ENCODE measurements at regions of chr13 and their contacts with region 1.

Region 1: DNA sequence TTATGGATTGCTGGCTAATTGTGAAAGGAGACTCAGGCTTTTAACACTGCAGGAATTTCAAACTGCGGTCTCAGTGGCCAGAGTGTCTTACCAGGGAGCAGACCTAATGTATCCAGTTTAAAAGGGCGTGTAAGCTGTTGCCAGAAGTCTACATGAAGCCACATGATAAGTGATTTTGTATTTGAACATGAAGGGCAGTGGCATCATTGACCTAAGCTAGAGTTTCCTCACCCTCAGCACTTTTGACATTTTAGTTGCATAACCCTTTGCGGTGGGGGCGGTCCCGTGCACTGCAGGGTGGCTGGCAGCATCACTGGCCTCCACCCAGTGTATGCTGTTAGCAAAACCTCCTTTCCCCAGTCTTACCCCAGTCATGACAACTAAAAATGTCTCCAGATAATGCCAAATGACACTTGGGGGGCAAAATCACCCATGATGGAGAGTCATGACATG is 23.7 kb upstream of the GPR18 start:
- DNase-seq: peak; percentile 46
- ATAC-seq: peak; percentile 81
- H3K4me3 Mint-ChIP-seq: peak overlapping the region; percentile 75
- H3K27ac Mint-ChIP-seq: peak overlapping the region; percentile 95
- H3K4me1 Mint-ChIP-seq: peaks cover 95% of the 10 kb centered on the region
- H3K27me3 Mint-ChIP-seq: no peaks in the 10 kb centered on the region
- CTCF ChIP-seq: no peak

Region 2: GRCh38 chr13:98509271-98510155 is 772.3 kb before region 1 on chr13:
- CTCF ChIA-PET with region 1: no interaction called
- POLR2A ChIA-PET with region 1: interaction called, 11 read pairs
- intact Hi-C with region 1: no loop called
- DNase-seq: no peak
- ATAC-seq: peak; percentile 84
- H3K4me3 Mint-ChIP-seq: peak overlapping the region; percentile 71
- H3K27ac Mint-ChIP-seq: peak overlapping the region; percentile 96
- H3K4me1 Mint-ChIP-seq: peaks cover 100% of the 10 kb centered on the region
- H3K27me3 Mint-ChIP-seq: no peaks in the 10 kb centered on the region
- CTCF ChIP-seq: no peak

Region 3: GRCh38 chr13:99214232-99214631 is 67.6 kb before region 1 on chr13:
- CTCF ChIA-PET with region 1: no interaction called
- POLR2A ChIA-PET with region 1: no interaction called
- intact Hi-C with region 1: no loop called
- DNase-seq: no peak
- ATAC-seq: peak; percentile 83
- H3K4me3 Mint-ChIP-seq: peak overlapping the region; percentile 49
- H3K27ac Mint-ChIP-seq: peak overlapping the region; percentile 81
- H3K4me1 Mint-ChIP-seq: peaks cover 57% of the 10 kb centered on the region
- H3K27me3 Mint-ChIP-seq: no peaks in the 10 kb centered on the region
- CTCF ChIP-seq: no peak

Region 4: DNA sequence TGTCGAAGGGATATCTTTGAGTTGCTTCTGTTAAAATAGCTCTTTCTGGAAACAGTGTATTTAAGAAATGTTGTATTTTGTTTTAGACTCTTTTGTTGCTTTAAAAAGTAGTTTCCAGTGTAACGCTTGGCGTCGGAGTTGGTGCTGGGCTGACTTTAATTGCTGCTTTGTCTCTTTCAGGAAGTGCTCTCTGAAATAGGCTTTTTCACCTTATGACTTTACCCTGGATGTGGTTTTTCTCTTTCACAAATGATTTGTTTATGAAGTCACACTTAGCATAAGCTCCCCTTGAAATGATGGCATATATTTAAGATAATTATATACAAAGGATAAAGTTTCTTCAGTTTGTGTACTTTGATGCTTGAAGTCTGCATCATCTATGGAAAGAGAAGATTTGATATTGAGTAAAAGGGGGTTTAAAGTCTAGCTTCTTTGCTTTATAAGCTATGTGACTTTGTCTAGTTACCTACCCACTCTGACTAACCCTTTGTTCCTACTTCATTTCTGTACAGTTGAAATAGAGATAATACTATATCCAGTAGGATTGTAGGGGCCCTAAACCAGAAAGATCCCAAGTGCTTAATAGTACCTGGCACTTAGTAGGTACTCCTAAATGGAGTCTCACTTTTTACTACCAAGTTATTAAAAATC is 23.5 kb before region 1 on chr13 and contains the start of gene GPR18:
- CTCF ChIA-PET with region 1: no interaction called
- POLR2A ChIA-PET with region 1: interaction called, 4 read pairs
- intact Hi-C with region 1: loop called (anchors 1 kb)
- DNase-seq: no peak
- ATAC-seq: peak; percentile 65
- H3K4me3 Mint-ChIP-seq: peak within 1 kb of the TSS; percentile 94
- H3K27ac Mint-ChIP-seq: peak within 1 kb of the TSS; percentile 96
- H3K4me1 Mint-ChIP-seq: peaks cover 86% of the 10 kb centered on the region
- H3K27me3 Mint-ChIP-seq: no peaks in the 10 kb centered on the region
- CTCF ChIP-seq: no peak
- total RNA-seq, gene GPR18: 29.0 and 32.4 TPM in 2 replicates

Region 5: DNA sequence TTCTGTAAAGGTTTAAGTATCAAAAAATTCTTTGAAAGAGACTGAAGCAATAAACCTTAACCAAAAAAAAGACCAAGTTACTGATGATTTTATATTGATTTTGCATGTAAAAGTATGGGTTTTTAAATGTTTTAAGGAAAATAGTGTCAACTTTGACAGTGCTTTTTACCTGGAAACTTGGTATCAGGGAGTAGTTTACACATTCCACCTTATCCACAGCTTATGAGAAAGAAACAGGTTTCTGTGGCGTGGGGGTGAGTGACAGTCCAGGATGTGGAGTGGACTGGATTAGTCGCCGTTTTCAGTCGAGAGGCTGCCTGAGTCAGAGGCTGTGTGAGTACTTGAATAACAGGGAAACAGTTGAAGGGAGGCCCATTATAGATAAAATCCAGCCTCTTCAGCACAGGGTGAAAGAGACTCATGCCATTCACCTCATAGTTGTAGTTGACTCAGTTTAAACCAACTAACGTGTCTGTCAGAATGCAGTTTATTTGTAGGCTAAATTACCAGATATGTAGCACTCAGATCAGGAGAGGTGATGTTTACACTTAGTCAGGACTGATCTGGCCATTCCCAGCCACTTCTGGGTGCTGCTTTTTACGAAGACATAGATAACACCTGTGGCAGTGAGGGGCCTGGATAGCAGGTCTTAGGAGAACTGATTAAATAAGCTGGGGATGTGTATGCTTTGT is 26.0 kb after region 1 on chr13:
- CTCF ChIA-PET with region 1: interaction called, 9 read pairs
- POLR2A ChIA-PET with region 1: interaction called, 26 read pairs
- intact Hi-C with region 1: loop called (anchors 1 kb)
- DNase-seq: no peak
- ATAC-seq: peak; percentile 57
- H3K4me3 Mint-ChIP-seq: peak overlapping the region; percentile 95
- H3K27ac Mint-ChIP-seq: peak overlapping the region; percentile 92
- H3K4me1 Mint-ChIP-seq: peaks cover 82% of the 10 kb centered on the region
- H3K27me3 Mint-ChIP-seq: no peaks in the 10 kb centered on the region
- CTCF ChIP-seq: no peak

Region 6: DNA sequence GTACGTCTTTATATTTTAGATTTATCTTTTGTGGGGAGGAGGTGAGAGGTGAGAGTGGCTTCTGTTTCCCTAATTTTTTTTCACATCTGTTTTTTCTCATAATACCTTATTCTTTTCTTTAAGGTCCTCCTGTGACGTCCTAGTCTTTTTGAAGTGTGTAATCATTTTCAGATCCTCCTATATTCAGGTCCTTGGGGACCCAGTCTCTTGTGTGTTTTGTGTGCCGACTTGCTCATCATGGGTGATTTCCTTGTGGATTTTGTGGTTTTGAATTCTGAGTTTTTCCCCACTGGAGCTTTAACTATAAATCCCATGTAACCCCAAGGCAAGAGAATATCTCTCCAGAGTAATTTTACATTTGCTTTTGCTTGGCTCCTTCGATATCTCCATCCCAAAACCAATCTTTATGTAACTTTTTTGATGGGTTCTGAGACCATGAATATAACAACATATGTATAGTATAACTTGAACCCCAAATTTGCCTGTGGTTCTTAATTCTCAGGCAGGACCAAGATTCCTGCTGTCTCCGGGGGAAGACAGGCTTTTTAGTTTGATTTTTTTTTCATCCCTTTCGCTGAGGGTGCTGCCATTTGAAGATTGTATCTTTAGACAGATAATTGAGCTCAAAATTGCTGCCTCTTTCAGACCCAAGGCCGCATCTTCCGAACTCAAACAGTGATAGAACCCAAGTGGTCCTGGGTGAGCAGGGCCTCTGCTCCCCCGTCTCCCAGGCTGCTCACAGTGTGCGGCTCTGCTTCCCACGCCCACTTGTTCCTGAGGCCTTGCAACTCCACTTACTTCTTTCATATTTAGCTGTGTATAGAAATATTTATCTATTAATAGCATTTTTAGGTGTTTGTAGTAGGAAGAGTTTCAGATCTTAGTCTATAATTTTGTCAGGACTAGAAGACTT is 84.5 kb after region 1 on chr13:
- CTCF ChIA-PET with region 1: interaction called, 3 read pairs
- POLR2A ChIA-PET with region 1: no interaction called
- intact Hi-C with region 1: loop called (anchors 2 kb)
- DNase-seq: no peak
- ATAC-seq: peak; percentile 90
- H3K4me3 Mint-ChIP-seq: peak overlapping the region; percentile 71
- H3K27ac Mint-ChIP-seq: peak overlapping the region; percentile 89
- H3K4me1 Mint-ChIP-seq: peaks cover 85% of the 10 kb centered on the region
- H3K27me3 Mint-ChIP-seq: no peaks in the 10 kb centered on the region
- CTCF ChIP-seq: no peak

Region 7: DNA sequence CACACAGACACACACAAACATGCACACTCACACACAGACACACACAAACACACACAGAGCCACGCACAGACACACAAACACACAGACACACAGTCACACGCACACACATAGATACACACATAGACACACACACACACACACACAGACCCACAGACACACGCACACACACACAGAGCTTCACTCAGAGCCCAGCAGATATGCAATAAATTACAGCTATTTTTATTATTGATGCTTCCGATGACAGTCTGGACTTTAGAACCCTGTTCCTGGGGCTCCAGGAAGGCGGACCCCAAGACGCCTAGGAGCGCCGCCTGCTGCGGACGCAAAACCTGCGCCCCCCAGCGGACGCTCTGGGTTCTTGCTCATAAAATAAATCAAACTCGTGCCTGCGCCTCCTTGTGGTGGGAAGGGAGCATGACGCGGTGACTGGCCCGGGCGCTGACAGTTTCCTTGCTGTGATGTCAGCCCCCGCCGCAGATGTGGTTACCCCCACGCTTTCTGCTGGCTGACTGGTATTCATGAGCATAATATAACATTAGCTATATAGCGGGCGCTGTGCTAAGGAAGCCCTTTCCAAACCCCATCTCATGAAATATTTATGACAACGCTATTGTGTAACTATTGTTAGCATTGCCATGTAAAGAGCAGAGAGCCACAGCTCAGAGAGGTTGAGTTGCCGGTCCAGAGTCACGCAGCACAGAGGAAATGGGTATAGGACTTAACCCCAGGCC is 155.0 kb after region 1 on chr13:
- CTCF ChIA-PET with region 1: interaction called, 24 read pairs
- POLR2A ChIA-PET with region 1: interaction called, 6 read pairs
- intact Hi-C with region 1: loop called (anchors 1 kb)
- DNase-seq: peak; percentile 87
- ATAC-seq: peak; percentile 59
- H3K4me3 Mint-ChIP-seq: peak overlapping the region; percentile 66
- H3K27ac Mint-ChIP-seq: peak overlapping the region; percentile 76
- H3K4me1 Mint-ChIP-seq: peaks cover 66% of the 10 kb centered on the region
- H3K27me3 Mint-ChIP-seq: peaks cover 2% of the 10 kb centered on the region
- CTCF ChIP-seq: peak; percentile 99

Region 8: DNA sequence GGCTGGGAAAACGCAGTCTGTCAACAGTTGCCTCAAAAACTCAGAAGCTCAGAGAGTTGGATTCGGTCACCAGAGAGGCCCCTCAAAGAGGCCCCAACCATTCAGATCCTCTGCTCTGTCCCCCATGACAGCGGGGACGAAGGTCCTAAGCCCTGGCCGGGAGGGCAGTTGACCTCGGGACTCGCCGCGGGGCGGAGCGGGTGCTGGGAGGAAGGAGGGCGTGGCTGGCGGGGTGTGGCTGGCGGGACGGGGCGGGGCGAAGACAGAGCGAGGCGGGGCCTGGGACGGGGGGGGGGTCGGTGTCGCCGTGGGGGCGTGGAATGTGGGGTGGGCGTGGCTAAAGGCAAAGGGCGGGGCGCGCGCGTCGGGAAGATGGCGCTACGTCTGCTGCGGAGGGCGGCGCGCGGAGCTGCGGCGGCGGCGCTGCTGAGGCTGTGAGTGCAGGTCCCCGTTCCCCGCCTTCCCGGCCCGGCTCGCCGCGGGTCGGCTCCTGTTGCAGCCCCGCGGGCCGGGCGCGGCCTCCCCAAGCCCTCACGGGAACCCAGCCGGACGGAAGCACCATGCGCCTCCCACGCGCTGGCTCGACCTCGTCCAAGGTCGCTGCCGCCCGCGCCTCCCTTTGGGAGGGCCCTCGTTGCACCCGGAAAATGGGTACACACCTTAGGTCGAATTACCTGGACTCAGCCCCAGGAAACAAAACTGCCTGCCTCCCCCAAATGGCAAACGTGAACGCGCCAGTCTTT is 324.7 kb after region 1 on chr13:
- CTCF ChIA-PET with region 1: no interaction called
- POLR2A ChIA-PET with region 1: no interaction called
- intact Hi-C with region 1: loop called (anchors 5 kb)
- DNase-seq: peak; percentile 86
- ATAC-seq: peak; percentile 91
- H3K4me3 Mint-ChIP-seq: peak within 1 kb of the TSS; percentile 91
- H3K27ac Mint-ChIP-seq: peak within 1 kb of the TSS; percentile 86
- H3K4me1 Mint-ChIP-seq: peaks cover 38% of the 10 kb centered on the region
- H3K27me3 Mint-ChIP-seq: no peaks in the 10 kb centered on the region
- CTCF ChIP-seq: no peak

Measured in activated B cell treated with CpG ODN at 0.5 μM for 24 hours (primary cell).